ENCODE measurements at regions of chr3 and their contacts with region 1.

Region 1: GRCh38 chr3:50292159-50293078 is at the start of gene IFRD2:
- DNase-seq: peak; percentile 98
- ATAC-seq: peak; percentile 99
- H3K4me3 Mint-ChIP-seq: peak within 1 kb of the TSS; percentile 88
- H3K27ac Mint-ChIP-seq: peak within 1 kb of the TSS; percentile 99
- H3K4me1 Mint-ChIP-seq: peaks cover 16% of the 10 kb centered on the region
- H3K27me3 Mint-ChIP-seq: no peaks in the 10 kb centered on the region
- total RNA-seq, gene IFRD2: 100 to 125 TPM

Region 2: DNA sequence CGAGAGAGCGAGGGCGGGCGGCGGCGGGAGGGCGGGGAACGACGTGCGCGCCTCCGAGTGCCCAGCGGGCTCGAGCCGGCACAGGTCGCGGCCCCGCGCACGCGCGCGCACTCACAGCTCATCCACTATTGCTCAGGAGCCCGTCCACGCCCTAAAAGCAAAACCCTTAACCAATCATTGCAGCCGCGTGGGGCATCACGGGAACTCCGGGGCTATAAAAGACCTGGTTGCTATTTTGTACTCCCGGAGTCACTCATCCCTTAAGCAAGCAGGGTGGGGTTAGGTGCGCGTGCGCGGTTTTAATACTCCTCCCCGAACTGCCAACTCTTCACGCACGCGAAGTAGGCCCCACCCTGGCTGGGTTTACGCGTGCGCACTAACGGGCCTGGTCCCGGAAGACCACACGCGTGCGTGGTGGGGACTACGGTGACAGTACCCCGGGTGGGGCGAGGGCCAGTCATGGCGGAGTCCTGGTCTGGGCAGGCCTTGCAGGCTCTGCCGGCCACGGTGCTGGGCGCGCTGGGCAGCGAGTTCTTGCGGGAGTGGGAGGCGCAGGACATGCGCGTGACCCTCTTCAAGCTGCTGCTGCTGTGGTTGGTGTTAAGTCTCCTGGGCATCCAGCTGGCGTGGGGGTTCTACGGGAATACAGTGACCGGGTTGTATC is 880.3 kb before region 1 on chr3 and contains the starts of genes RHOA and TCTA:
- CTCF ChIA-PET with region 1: no interaction called
- POLR2A ChIA-PET with region 1: no interaction called
- intact Hi-C with region 1: loop called in 1 of 2 experiments (anchors 5 kb)
- DNase-seq: peak; percentile 99
- ATAC-seq: peak; percentile 88
- H3K4me3 Mint-ChIP-seq: peak within 1 kb of the TSS; percentile 97
- H3K27ac Mint-ChIP-seq: peak within 1 kb of the TSS; percentile 97
- H3K4me1 Mint-ChIP-seq: peaks cover 63% of the 10 kb centered on the region
- H3K27me3 Mint-ChIP-seq: no peaks in the 10 kb centered on the region
- total RNA-seq, gene RHOA: 438 to 449 TPM
- total RNA-seq, gene TCTA: 9.4 TPM

Region 3: DNA sequence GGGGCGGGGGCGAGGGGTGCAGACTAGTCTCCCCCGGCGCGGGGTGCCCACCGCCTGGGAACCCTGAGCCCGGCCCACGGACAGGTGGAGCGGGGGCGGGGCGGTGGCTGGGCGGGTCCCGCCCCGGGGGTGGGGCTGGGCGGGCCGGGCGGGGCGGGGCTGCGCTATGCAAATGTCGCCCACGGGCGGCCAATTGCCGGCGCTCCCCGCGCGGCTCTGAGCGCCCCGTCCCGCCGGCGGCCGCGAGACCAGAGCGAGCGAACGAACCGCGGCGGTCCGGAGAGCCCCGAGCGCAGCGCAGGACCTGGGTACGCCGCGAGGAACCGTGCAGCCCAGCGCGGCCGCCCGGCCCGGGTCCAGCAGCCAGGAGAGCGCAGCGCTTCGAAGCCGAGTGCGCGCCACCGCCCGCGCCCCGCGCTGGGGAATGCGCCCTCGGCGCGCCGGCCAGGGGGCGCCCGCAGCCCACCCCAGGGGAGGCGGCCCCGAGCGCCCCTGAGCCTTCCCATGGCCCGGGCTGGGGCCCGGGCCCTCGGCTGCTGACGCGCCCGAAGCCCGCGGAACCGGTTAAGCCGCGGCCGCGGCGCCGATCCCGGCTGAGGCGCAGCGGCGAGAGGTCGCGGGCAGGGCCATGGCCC is 137.5 kb before region 1 on chr3 and contains the start of gene SEMA3F:
- CTCF ChIA-PET with region 1: no interaction called
- POLR2A ChIA-PET with region 1: no interaction called
- intact Hi-C with region 1: loop called in 1 of 2 experiments (anchors 1 kb)
- DNase-seq: peak; percentile 79
- ATAC-seq: peak; percentile 89
- H3K4me3 Mint-ChIP-seq: peak within 1 kb of the TSS; percentile 60
- H3K27ac Mint-ChIP-seq: no peak within 1 kb of the TSS
- H3K4me1 Mint-ChIP-seq: peaks cover 8% of the 10 kb centered on the region
- H3K27me3 Mint-ChIP-seq: peaks cover 29% of the 10 kb centered on the region
- total RNA-seq, gene SEMA3F: 0.25 to 0.46 TPM

Region 4: GRCh38 chr3:50245831-50246516 is 46.4 kb before region 1 on chr3:
- CTCF ChIA-PET with region 1: interaction called, 5 read pairs
- POLR2A ChIA-PET with region 1: interaction called, 3 read pairs
- intact Hi-C with region 1: loop called in 1 of 2 experiments (anchors 1 kb)
- DNase-seq: peak; percentile 98
- ATAC-seq: peak; percentile 76
- H3K4me3 Mint-ChIP-seq: peak overlapping the region; percentile 75
- H3K27ac Mint-ChIP-seq: peak overlapping the region; percentile 95
- H3K4me1 Mint-ChIP-seq: peaks cover 84% of the 10 kb centered on the region
- H3K27me3 Mint-ChIP-seq: no peaks in the 10 kb centered on the region

Region 5: GRCh38 chr3:50321336-50322114 is 29.1 kb after region 1 on chr3:
- CTCF ChIA-PET with region 1: interaction called, 6 read pairs
- POLR2A ChIA-PET with region 1: no interaction called
- intact Hi-C with region 1: loop called in 1 of 2 experiments (anchors 1 kb)
- DNase-seq: peak; percentile 90
- ATAC-seq: peak; percentile 79
- H3K4me3 Mint-ChIP-seq: peak overlapping the region; percentile 84
- H3K27ac Mint-ChIP-seq: peak overlapping the region; percentile 85
- H3K4me1 Mint-ChIP-seq: peaks cover 38% of the 10 kb centered on the region
- H3K27me3 Mint-ChIP-seq: no peaks in the 10 kb centered on the region

Region 6: DNA sequence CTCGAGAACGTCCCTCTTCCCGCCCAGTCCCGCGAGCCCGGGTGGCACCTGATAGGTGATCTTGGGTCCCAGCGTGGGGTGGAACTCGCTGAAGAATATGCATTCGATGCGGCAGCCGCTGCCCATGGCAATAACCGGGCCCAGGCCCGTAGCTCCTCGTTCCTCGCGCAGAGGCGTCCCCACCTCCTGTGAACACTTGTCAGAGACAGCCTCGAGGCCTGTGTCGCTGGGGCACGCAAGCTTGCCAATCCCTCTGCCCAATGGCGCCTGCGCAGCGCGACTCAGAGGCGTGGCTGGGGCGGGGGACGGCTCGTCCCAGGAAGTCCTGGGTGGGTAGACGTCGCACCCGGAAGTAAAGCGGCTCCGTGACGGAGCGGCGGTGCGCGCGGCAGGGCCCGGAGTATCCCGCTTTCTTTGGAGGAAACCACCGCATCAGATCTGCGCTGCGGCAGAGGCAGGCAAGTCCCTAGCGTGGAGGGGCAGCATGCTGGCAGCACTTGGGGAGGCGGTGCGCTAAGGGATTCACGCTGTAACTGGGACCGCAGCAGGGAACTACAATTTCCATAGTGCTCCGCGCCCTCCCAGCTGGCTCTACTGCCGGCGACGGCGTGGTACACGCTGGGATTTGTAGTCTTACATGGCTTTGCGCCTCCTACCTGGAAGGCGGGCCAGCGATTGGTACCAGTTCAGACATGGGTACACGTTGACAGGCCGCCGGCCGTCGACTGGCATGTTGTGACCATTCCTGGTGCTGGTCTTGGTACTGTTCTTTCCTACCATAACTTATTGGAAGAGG is 58.3 kb after region 1 on chr3 and contains the starts of genes CYB561D2 and NPRL2:
- CTCF ChIA-PET with region 1: interaction called, 4 read pairs
- POLR2A ChIA-PET with region 1: no interaction called
- intact Hi-C with region 1: loop called (anchors 1 kb)
- DNase-seq: peak; percentile 99
- ATAC-seq: peak; percentile 90
- H3K4me3 Mint-ChIP-seq: peak within 1 kb of the TSS; percentile 90
- H3K27ac Mint-ChIP-seq: peak within 1 kb of the TSS; percentile 97
- H3K4me1 Mint-ChIP-seq: peaks cover 55% of the 10 kb centered on the region
- H3K27me3 Mint-ChIP-seq: no peaks in the 10 kb centered on the region
- total RNA-seq, gene CYB561D2: 10.3 to 14.3 TPM
- total RNA-seq, gene NPRL2: 42.5 to 43.0 TPM

Region 7: GRCh38 chr3:50396488-50396887 is 104.1 kb after region 1 on chr3:
- CTCF ChIA-PET with region 1: no interaction called
- POLR2A ChIA-PET with region 1: no interaction called
- intact Hi-C with region 1: no loop called
- DNase-seq: no peak
- ATAC-seq: no peak
- H3K4me3 Mint-ChIP-seq: no peak overlapping the region
- H3K27ac Mint-ChIP-seq: no peak overlapping the region
- H3K4me1 Mint-ChIP-seq: peaks cover 1% of the 10 kb centered on the region
- H3K27me3 Mint-ChIP-seq: no peaks in the 10 kb centered on the region

Region 8: GRCh38 chr3:50568947-50569749 is 276.7 kb after region 1 on chr3 and contains the start of gene HEMK1:
- CTCF ChIA-PET with region 1: no interaction called
- POLR2A ChIA-PET with region 1: interaction called, 3 read pairs
- intact Hi-C with region 1: loop called in 1 of 2 experiments (anchors 1 kb)
- DNase-seq: peak; percentile 98
- ATAC-seq: peak; percentile 33
- H3K4me3 Mint-ChIP-seq: peak within 1 kb of the TSS; percentile 100
- H3K27ac Mint-ChIP-seq: peak within 1 kb of the TSS; percentile 99
- H3K4me1 Mint-ChIP-seq: peaks cover 59% of the 10 kb centered on the region
- H3K27me3 Mint-ChIP-seq: no peaks in the 10 kb centered on the region
- total RNA-seq, gene HEMK1: 61.6 to 77.7 TPM

Region 9: DNA sequence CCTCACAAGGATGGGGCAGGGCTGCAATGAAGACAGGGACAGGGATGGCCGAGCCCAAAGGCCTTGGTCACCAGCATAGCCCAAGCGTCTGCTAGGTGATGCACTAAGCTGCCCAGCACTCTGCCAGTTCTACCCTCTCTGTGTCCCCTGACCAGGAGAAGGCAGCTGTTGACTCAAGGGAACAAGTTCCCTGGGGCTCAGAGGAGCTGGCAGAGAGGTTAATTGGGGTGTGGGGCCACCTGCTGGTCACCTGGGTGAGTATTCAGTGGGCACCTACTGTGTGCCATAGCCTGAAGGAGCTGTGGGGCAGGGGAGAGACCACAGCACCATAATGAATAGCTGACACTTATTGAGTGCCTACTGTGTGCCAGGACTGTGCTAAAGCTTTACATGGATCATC is 360.3 kb after region 1 on chr3:
- CTCF ChIA-PET with region 1: no interaction called
- POLR2A ChIA-PET with region 1: no interaction called
- intact Hi-C with region 1: no loop called
- DNase-seq: peak; percentile 80
- ATAC-seq: peak; percentile 51
- H3K4me3 Mint-ChIP-seq: no peak overlapping the region
- H3K27ac Mint-ChIP-seq: peak overlapping the region; percentile 7
- H3K4me1 Mint-ChIP-seq: peaks cover 25% of the 10 kb centered on the region
- H3K27me3 Mint-ChIP-seq: no peaks in the 10 kb centered on the region

Measured in activated CD4-positive, alpha-beta T cell treated with anti-CD3 and anti-CD28 coated beads for 36 hours (primary cell).